Activated naive CD4-positive, alpha-beta T cell treated with anti-CD3 and anti-CD28 coated beads for 36 hours (primary cell): ENCODE measurements at regions of chr14 and their contacts with region 1.

Region 1: GRCh38 chr14:22570132-22570949 is 18.7 kb downstream of the DAD1 start:
- DNase-seq: peak; percentile 93
- H3K4me3 Mint-ChIP-seq: peak overlapping the region; percentile 85
- H3K27ac Mint-ChIP-seq: peak overlapping the region; percentile 97
- H3K4me1 Mint-ChIP-seq: peaks cover 68% of the 10 kb centered on the region
- H3K27me3 Mint-ChIP-seq: no peaks in the 10 kb centered on the region

Region 2: DNA sequence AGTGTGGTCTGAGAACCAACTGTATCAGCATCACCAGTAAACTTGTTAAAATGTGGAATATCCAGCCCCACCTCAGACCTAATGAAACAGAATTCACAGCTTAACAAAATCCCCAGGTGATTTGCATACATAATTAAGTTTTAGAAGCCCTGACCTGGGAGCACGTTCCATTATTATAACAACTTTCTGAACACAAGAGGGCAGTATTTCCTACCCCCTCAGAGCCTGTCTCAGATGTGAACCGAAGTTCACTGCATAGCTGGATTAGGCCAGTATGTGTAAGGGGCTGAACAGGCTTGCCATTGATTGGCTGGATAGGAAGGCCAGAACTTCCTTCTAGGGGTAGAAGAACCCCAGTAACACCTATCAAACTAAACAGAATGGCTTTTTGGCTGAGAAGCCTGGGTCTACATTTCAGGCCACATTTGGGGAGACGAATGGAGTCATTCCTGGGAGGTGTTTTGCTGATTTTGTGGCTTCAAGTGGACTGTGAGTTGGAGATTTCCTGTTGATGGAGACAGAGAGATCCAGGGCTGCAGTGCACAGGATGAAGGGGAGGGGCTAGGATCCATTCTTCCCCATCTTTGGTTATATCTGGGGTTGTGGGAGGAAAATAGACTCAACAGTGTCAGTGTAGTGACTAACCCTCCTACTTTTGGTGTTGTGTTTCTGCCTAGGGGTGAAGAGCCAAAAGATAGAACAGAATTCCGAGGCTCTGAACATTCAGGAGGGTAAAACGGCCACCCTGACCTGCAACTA is 802.0 kb before region 1 on chr14:
- CTCF ChIA-PET with region 1: interaction called, 3 read pairs
- intact Hi-C with region 1: loop called (anchors 1 kb)
- DNase-seq: peak; percentile 39
- H3K4me3 Mint-ChIP-seq: peak overlapping the region; percentile 72
- H3K27ac Mint-ChIP-seq: peak overlapping the region; percentile 83
- H3K4me1 Mint-ChIP-seq: peaks cover 9% of the 10 kb centered on the region
- H3K27me3 Mint-ChIP-seq: no peaks in the 10 kb centered on the region

Region 3: GRCh38 chr14:21978184-21978998 is 592.0 kb before region 1 on chr14:
- CTCF ChIA-PET with region 1: interaction called, 19 read pairs
- intact Hi-C with region 1: loop called (anchors 1 kb)
- DNase-seq: peak; percentile 78
- H3K4me3 Mint-ChIP-seq: peak overlapping the region; percentile 76
- H3K27ac Mint-ChIP-seq: peak overlapping the region; percentile 76
- H3K4me1 Mint-ChIP-seq: peaks cover 26% of the 10 kb centered on the region
- H3K27me3 Mint-ChIP-seq: no peaks in the 10 kb centered on the region

Region 4: DNA sequence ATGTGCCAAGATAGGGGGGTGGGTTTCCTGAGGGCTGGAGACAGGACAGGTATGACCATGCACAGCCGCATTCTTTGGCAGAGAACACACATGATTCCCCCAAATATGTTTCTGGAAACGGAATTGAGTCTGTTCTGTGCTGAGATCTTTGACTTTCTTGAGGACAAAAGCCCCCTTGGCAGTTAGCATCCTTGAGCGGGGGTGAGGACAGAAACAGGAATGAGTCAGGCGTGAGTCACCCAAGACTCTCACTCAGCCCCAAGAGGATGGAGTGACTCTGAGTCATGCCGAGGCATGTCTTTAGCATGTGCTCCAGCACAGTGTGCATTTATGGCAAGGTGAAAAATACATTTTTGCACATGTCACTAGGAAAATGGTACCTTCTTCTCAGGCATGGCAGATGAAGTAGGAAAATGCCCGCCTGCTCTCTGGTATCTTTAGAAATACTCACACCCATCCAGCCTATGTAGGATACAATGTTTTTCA is 33.4 kb before region 1 on chr14:
- CTCF ChIA-PET with region 1: interaction called, 27 read pairs
- intact Hi-C with region 1: loop called (anchors 5 kb)
- DNase-seq: peak; percentile 95
- H3K4me3 Mint-ChIP-seq: peak overlapping the region; percentile 67
- H3K27ac Mint-ChIP-seq: peak overlapping the region; percentile 98
- H3K4me1 Mint-ChIP-seq: peaks cover 93% of the 10 kb centered on the region
- H3K27me3 Mint-ChIP-seq: no peaks in the 10 kb centered on the region

Region 5: DNA sequence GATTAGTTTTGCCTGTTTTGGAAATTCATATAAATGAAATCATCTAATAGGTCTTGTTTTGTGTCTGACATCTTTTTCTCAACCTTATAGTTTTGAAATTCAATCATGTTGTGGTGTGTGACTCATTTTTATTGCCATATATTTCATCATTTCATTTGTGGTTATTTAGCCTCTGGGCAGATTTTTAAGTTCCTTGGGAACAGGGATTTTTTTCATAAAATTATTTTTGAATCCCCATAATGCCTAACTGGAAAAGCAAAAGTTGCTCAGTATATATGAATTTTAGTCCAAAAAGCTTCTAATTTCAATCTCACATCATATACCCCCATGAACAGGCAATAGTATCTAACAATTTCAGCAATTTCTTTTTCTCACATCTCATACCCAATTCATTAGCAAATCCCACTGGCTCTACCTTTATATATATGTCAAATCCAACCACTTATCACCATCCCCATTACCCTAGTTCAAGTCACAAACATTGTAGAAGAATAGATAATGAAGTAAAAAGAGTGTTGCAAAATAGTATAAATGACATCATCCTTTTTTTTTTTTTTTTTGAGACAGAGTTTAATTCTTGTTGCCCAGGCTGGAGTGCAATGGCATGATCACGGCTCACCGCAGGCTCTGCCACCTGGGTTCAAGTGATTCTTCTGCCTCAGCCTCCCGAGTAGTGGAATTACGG is 76.4 kb after region 1 on chr14:
- CTCF ChIA-PET with region 1: interaction called, 141 read pairs
- intact Hi-C with region 1: loop called (anchors 1 kb)
- DNase-seq: no peak
- H3K4me3 Mint-ChIP-seq: no peak overlapping the region
- H3K27ac Mint-ChIP-seq: peak overlapping the region; percentile 39
- H3K4me1 Mint-ChIP-seq: peaks cover 7% of the 10 kb centered on the region
- H3K27me3 Mint-ChIP-seq: no peaks in the 10 kb centered on the region

Region 6: GRCh38 chr14:22822571-22823098 is 252.3 kb after region 1 on chr14:
- CTCF ChIA-PET with region 1: interaction called, 20 read pairs
- intact Hi-C with region 1: loop called (anchors 1 kb)
- DNase-seq: peak; percentile 75
- H3K4me3 Mint-ChIP-seq: peak overlapping the region; percentile 61
- H3K27ac Mint-ChIP-seq: no peak overlapping the region
- H3K4me1 Mint-ChIP-seq: peaks cover 31% of the 10 kb centered on the region
- H3K27me3 Mint-ChIP-seq: peaks cover 1% of the 10 kb centered on the region

Region 7: DNA sequence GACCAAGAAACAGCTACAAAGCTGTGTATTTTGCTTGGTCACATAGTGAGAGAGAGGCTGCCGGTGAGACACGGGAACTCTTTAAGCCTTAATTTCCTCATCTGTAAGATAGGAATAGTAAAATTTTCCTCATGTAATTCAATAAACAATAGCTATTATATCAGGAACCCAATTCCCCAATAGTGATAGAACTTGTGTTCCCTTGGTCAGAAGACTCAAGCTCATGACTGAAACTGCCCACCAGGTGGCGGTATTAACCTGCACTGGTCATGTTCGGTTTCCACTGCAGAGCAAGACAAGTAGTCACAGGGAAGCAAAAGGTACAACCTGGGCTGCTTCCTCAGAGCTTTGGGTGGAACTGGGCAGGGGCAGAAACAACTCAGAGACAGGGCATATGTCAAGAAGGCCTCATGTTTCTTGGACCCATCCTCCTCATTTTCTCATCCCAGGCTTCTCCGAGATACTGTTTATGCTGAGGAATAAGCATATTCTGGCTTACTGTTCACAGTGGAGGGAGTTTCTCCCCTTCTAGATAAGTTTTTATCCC is 416.2 kb after region 1 on chr14:
- CTCF ChIA-PET with region 1: interaction called, 3 read pairs
- intact Hi-C with region 1: loop called (anchors 2 kb)
- DNase-seq: peak; percentile 97
- H3K4me3 Mint-ChIP-seq: no peak overlapping the region
- H3K27ac Mint-ChIP-seq: no peak overlapping the region
- H3K4me1 Mint-ChIP-seq: no peaks in the 10 kb centered on the region
- H3K27me3 Mint-ChIP-seq: no peaks in the 10 kb centered on the region